Mammary epithelial cell (primary cell): ENCODE measurements at regions of chr9 and their contacts with region 1.

Region 1: DNA sequence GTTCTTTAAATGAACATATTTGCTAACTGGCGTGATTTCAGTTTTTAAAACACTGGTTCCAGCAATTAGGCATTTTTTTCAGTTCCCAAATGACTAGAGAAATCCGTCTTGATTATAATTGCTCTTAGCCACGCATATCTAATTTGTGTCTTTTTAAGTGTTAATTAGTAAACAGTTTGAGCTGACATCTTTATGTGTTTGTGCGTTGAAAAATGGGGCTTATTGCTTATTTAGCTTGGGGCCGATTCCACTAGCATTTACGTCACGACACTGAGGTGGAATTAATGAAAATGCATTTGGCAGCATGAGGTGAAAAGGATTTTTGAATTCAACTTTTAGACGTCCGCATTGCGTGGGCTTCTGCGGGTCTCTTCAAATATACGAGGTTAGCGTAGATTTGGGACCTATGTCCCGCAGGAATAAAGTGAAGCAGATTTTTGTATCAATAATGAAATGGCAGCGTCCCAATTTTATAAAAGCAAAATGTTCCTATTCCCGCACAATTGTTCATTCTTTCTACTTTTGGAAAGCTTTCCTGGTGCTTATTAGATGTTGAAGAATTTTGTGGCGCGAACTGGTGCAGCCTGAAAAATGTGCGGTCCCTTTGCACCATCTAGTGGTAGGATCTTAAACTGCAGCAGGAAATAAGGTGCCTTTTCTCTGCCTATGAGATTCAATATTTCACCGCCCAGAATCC is 122.7 kb upstream of the LMX1B start:
- DNase-seq: peak; percentile 45
- H3K4me3 ChIP-seq: no peak overlapping the region
- H3K27ac ChIP-seq: no peak overlapping the region
- H3K4me1 ChIP-seq: peaks cover 4% of the 10 kb centered on the region
- H3K27me3 ChIP-seq: no peaks in the 10 kb centered on the region
- CTCF ChIP-seq: peak; percentile 91 to 95

Region 2: DNA sequence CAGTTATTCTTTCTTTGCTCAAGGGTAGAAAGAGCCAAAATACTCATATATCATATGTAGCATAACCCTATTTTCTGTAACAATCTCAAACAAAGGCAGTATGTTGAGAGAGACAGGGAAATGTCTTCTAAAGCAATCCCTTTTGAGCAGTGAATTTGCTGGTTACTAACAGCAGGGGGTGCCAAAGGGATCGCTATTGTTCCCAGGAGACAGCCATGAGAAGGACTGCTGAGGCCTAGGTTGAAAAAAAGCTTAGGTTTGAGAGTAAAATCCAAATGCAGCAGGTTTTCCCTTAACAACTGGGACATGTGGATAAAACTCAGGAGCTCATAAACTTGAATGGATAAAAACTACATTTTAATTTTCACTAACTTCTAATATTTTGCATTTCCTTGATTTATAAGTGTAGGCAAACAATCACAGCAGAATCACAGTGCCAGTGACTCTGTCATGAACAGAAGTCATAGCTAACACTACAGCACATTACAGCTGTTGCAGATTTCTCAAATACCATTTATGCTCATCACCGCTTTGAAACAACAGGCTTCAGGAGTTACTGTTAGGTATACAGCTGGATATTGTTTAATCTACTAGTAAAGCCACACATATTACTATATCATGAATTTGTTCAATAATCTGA is 932.4 kb before region 1 on chr9:
- CTCF ChIA-PET with region 1: no interaction called
- dilution Hi-C with region 1: no loop called
- in situ Hi-C with region 1: no loop called
- intact Hi-C with region 1: loop called (anchors 5 kb)
- DNase-seq: peak; percentile 54
- H3K4me3 ChIP-seq: no peak overlapping the region
- H3K27ac ChIP-seq: no peak overlapping the region
- H3K4me1 ChIP-seq: no peaks in the 10 kb centered on the region
- H3K27me3 ChIP-seq: no peaks in the 10 kb centered on the region
- CTCF ChIP-seq: peak; percentile 81 to 82

Region 3: GRCh38 chr9:126275386-126276001 is 215.5 kb before region 1 on chr9:
- CTCF ChIA-PET with region 1: no interaction called
- dilution Hi-C with region 1: no loop called
- in situ Hi-C with region 1: no loop called
- intact Hi-C with region 1: no loop called
- DNase-seq: no peak
- H3K4me3 ChIP-seq: no peak overlapping the region
- H3K27ac ChIP-seq: no peak overlapping the region
- H3K4me1 ChIP-seq: no peaks in the 10 kb centered on the region
- H3K27me3 ChIP-seq: peaks cover under 1% of the 10 kb centered on the region
- CTCF ChIP-seq: no peak

Region 4: GRCh38 chr9:126301985-126302603 is 188.9 kb before region 1 on chr9:
- CTCF ChIA-PET with region 1: no interaction called
- dilution Hi-C with region 1: no loop called
- in situ Hi-C with region 1: no loop called
- intact Hi-C with region 1: loop called (anchors 1 kb)
- DNase-seq: peak; percentile 45
- H3K4me3 ChIP-seq: no peak overlapping the region
- H3K27ac ChIP-seq: no peak overlapping the region
- H3K4me1 ChIP-seq: no peaks in the 10 kb centered on the region
- H3K27me3 ChIP-seq: peaks cover 2% of the 10 kb centered on the region
- CTCF ChIP-seq: peak; percentile 60 to 87

Region 5: DNA sequence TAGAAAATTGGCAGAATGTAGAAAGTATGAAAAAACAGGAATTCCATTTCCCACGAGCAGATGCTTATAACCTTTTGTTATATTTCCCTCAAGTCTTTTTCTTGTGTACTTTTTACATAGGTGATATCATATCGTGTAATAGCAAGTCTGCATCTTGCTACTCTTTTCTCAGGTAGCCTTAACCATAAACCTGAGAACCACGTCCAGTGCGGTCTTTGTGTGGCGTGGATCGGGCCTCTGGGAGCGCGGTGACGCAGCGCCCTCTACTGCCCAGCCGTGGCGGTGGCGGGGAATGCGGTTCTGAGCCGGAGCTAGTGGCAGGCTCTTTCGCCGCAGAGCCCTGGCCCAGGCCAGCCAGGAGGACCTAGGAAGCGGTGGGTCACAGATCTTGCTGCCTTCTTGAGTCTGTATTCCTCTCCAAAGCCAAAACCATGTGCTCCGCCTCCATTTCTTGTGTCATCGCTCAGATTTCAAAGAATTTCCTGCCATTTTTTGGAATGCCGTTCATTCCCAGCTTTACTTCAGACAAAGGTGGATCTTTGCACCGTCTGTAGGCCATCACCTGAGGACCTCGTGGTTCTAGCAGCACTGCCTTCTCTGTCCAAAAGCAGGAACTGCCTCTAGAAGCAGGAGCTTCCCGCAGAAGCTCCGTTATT is 92.5 kb before region 1 on chr9:
- CTCF ChIA-PET with region 1: no interaction called
- dilution Hi-C with region 1: no loop called
- in situ Hi-C with region 1: no loop called
- intact Hi-C with region 1: loop called (anchors 5 kb)
- DNase-seq: peak; percentile 46
- H3K4me3 ChIP-seq: no peak overlapping the region
- H3K27ac ChIP-seq: no peak overlapping the region
- H3K4me1 ChIP-seq: peaks cover 13% of the 10 kb centered on the region
- H3K27me3 ChIP-seq: no peaks in the 10 kb centered on the region
- CTCF ChIP-seq: peak; percentile 93 to 100

Region 6: DNA sequence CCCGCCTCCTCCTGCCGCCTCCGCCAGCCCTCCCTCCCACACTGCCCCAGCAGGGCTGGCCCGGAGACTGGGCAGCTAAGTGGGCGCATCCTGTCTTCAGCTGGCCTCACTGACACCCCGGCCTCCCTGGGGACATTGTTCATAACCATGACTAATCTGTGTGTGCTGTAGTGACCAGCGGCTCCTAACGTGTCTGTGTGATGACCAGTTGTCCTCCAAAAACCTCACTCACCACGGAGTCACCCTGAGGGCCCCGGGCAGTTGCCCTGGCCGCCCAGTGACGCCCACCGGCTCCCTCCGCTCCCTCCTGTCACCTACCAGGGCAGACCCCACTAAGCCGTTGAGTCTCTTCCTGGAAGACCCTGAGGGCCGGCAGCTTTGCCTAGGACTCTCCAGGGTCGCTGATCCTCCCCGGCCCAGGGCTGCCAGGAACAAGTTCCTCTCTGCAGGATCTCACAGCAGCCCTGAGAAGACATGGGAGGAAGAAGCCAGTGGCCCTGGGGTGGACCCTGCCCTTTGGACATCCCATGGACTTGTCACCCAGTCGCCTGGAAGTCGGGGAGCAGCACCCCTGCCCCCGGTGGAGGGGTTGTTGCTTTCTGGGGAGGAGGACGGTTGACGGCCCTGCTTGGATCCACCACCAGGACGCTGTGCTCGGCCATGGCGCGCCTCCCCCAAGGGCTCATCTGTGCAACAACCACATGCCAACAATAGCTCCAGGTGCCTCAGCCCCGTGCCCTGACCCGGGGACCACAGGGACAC is 12.5 kb after region 1 on chr9:
- CTCF ChIA-PET with region 1: no interaction called
- dilution Hi-C with region 1: no loop called
- in situ Hi-C with region 1: no loop called
- intact Hi-C with region 1: no loop called
- DNase-seq: no peak
- H3K4me3 ChIP-seq: no peak overlapping the region
- H3K27ac ChIP-seq: no peak overlapping the region
- H3K4me1 ChIP-seq: peaks cover 21% of the 10 kb centered on the region
- H3K27me3 ChIP-seq: no peaks in the 10 kb centered on the region
- CTCF ChIP-seq: no peak

Region 7: GRCh38 chr9:126781186-126782052 is 290.4 kb after region 1 on chr9:
- CTCF ChIA-PET with region 1: interaction called, 16 read pairs
- dilution Hi-C with region 1: no loop called
- in situ Hi-C with region 1: no loop called
- intact Hi-C with region 1: no loop called
- DNase-seq: peak; percentile 65
- H3K4me3 ChIP-seq: peak overlapping the region in 1 of 3 experiments; percentile 23
- H3K27ac ChIP-seq: no peak overlapping the region
- H3K4me1 ChIP-seq: no peaks in the 10 kb centered on the region
- H3K27me3 ChIP-seq: no peaks in the 10 kb centered on the region
- CTCF ChIP-seq: peak; percentile 69 to 91